ENCODE measurements at regions of chr3 and their contacts with region 1.

Region 1: DNA sequence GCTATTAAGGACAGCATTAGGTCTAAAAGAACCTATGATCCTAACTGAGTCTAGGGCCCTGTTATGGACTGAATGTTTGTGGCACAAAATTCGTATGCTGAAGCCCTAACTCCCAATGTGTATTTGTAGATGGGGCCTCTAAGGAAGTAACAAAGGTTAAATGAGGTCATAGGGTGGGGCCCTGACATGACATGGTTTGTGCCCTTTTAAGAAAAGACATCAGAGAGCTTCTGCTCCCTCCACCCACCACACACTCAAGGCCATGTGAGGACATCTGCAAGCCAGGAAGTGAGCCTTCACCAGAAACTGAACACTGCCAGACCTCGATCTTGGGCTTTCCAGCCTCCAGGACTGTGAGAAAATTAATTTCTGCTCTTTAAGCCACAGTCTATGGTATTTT is 49.2 kb downstream of the PHC3 start:
- DNase-seq: no peak
- H3K4me3 Mint-ChIP-seq: no peak overlapping the region
- H3K27ac Mint-ChIP-seq: no peak overlapping the region
- H3K4me1 Mint-ChIP-seq: peaks cover 10% of the 10 kb centered on the region
- H3K27me3 Mint-ChIP-seq: no peaks in the 10 kb centered on the region
- CTCF ChIP-seq: no peak

Region 2: GRCh38 chr3:169836078-169836941 is 296.0 kb before region 1 on chr3:
- CTCF ChIA-PET with region 1: no interaction called
- intact Hi-C with region 1: no loop called
- DNase-seq: no peak
- H3K4me3 Mint-ChIP-seq: no peak overlapping the region
- H3K27ac Mint-ChIP-seq: no peak overlapping the region
- H3K4me1 Mint-ChIP-seq: peaks cover 5% of the 10 kb centered on the region
- H3K27me3 Mint-ChIP-seq: no peaks in the 10 kb centered on the region
- CTCF ChIP-seq: no peak

Region 3: DNA sequence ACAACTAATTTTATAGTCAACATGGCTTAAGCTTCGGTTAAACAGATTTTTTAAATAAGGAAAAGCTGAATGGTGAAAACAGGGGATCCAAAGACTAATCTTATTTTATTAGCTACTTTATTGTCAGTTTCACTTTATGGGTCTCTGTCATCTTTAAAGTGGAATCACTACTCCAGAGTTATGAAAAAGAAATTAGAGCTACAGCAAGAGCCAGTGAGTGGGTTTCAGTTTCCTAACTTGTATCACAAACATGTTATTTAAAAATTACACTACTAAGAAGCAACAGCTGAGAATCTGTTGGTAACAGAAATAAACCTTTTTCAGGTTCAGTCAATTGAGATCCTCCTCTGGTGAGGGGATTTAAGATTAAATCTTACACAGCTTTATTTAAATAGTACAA is 39.2 kb after region 1 on chr3:
- CTCF ChIA-PET with region 1: interaction called, 10 read pairs
- intact Hi-C with region 1: no loop called
- DNase-seq: no peak
- H3K4me3 Mint-ChIP-seq: no peak overlapping the region
- H3K27ac Mint-ChIP-seq: no peak overlapping the region
- H3K4me1 Mint-ChIP-seq: no peaks in the 10 kb centered on the region
- H3K27me3 Mint-ChIP-seq: no peaks in the 10 kb centered on the region
- CTCF ChIP-seq: no peak

Measured in Calu3 (cell line).